Cardiac septum (tissue), 1 donor: ENCODE measurements at regions of chr16 and their contacts with region 1.

Region 1: DNA sequence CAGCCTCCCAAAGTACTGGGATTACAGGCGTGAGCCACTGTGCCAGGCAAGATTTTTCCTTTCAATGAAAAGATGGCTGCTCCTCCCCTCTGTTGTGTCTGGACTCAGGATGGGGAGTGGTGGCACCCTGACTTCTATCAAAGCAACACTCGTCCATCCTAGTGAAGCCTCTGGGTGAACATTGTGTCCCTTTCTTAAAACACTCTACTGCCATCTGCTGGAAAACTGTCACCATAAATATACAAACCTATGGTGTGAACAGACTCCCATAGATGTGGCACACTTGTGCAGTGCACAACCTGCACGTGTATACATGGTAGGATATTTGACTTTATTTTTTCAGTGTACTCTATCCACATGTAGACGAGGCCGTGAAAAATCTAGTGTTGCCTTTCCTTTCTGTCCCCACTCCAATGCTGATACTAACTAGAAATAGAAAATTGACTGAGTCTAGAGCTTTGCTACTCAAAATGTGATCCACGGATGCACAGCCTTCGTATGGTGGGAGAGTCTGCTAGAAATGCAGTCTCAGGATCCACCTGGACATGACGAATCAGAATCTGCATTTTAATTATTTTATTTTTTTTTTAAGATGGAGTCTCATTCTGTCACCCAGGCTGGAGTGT is 55.9 kb upstream of the PLCG2 start:
- DNase-seq: no peak

Region 2: GRCh38 chr16:81366316-81366932 is 356.8 kb before region 1 on chr16:
- intact Hi-C with region 1: loop called (anchors 5 kb)
- DNase-seq: no peak

Region 3: DNA sequence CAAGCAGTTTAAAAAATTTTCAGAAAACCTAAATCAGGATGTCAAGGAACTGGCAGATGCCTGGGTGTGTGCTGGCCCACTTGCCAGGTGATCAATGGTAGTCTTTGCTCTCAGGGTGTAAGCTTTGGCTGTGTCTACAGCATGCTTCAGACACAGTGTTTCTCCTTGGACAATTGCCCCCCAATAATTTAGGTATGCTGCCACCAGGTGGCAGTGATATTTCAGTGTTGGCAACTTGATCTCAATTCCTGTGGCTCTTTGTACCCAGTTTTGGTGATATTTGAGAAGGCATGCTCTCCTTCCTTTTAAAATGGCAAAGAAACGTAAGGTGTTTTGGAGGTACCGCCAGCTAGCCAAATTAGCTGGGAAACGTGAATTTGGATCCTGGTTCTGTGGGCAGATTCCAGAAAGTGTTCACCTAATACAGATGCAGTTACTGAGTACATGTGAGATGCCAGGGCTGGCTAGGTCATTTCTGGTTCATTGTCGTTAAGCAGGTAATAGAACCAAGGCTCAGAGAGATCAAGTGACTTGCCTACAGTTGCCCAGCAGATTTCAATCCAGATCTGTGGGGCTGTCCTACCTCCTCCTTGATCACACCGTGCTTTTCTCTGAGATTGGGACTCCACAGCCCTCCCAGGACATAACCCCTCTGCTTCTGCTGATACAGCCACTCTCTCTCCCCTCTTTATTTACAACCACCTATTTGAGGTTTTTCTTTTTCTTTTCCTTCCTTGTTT is 99.7 kb before region 1 on chr16:
- intact Hi-C with region 1: loop called (anchors 5 kb)
- DNase-seq: no peak

Region 4: GRCh38 chr16:81686391-81687130 is 36.6 kb before region 1 on chr16:
- intact Hi-C with region 1: no loop called
- DNase-seq: no peak